MCF 10A (cell line): ENCODE measurements at regions of chr1 and their contacts with region 1.

Region 1: DNA sequence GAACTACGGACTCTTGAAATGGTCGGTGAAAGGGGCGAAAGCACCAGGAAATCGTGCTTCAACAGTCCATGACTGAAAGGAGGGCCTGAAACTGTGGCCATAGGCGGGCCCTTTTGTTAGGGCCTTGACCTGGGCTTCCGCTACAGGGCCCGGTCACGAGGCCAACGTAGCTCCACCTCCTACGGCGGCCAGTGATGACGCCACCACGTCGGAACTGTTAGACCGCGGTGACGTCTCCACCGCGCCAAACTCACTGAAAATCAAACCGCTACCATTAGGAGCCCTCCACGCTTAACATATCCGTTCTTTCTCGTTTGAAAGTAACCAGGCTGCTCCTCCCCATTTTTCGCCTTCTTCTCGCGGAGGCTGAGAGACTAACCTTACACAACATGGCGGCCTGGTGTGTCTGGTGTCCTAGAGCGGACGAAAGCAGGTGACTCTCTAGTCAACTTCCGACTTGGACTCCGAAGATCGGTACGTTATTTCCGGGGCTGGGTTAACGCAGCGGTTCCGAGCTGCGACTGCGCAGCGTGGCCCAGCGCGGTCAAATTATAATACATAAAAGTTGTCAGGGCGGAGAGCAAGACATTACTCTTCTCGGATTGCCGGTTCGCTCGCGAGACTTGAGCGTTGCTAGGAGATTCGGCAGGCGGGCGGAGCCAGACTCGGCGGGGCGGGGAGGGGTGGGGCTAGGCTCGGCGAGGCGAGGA is 376 bp upstream of the CACYBP start:
- DNase-seq: peak; percentile 100
- H3K4me3 Mint-ChIP-seq: no peak overlapping the region
- H3K27ac Mint-ChIP-seq: no peak overlapping the region
- H3K4me1 Mint-ChIP-seq: peaks cover 41% of the 10 kb centered on the region
- H3K27me3 Mint-ChIP-seq: no peaks in the 10 kb centered on the region
- CTCF ChIP-seq: no peak

Region 2: GRCh38 chr1:174276087-174276486 is 723.3 kb before region 1 on chr1:
- CTCF ChIA-PET with region 1: no interaction called
- POLR2A ChIA-PET with region 1: no interaction called
- intact Hi-C with region 1: no loop called
- DNase-seq: no peak
- H3K4me3 Mint-ChIP-seq: no peak overlapping the region
- H3K27ac Mint-ChIP-seq: no peak overlapping the region
- H3K4me1 Mint-ChIP-seq: no peaks in the 10 kb centered on the region
- H3K27me3 Mint-ChIP-seq: no peaks in the 10 kb centered on the region
- CTCF ChIP-seq: no peak

Region 3: DNA sequence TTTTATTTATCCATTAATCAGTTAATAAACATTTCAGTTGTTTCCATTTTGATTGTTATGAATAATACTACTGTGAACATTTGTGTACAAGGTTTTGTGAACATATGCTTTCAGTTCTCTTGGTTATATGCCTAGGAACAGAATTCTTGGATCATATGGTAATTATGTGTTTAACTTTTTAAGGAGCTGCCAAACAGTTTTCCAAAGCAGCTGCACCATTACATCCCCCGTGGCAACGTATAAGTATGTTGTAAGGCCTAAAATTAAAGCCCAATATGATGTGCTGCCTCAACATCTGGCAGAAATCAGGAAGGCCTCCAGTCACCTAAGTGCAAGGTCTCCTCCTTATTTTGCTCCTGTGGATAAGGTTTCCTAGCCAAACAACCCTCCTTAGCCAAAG is 235.2 kb before region 1 on chr1:
- CTCF ChIA-PET with region 1: interaction called, 96 read pairs
- POLR2A ChIA-PET with region 1: interaction called, 20 read pairs
- intact Hi-C with region 1: no loop called
- DNase-seq: no peak
- H3K4me3 Mint-ChIP-seq: no peak overlapping the region
- H3K27ac Mint-ChIP-seq: no peak overlapping the region
- H3K4me1 Mint-ChIP-seq: no peaks in the 10 kb centered on the region
- H3K27me3 Mint-ChIP-seq: no peaks in the 10 kb centered on the region
- CTCF ChIP-seq: no peak

Region 4: DNA sequence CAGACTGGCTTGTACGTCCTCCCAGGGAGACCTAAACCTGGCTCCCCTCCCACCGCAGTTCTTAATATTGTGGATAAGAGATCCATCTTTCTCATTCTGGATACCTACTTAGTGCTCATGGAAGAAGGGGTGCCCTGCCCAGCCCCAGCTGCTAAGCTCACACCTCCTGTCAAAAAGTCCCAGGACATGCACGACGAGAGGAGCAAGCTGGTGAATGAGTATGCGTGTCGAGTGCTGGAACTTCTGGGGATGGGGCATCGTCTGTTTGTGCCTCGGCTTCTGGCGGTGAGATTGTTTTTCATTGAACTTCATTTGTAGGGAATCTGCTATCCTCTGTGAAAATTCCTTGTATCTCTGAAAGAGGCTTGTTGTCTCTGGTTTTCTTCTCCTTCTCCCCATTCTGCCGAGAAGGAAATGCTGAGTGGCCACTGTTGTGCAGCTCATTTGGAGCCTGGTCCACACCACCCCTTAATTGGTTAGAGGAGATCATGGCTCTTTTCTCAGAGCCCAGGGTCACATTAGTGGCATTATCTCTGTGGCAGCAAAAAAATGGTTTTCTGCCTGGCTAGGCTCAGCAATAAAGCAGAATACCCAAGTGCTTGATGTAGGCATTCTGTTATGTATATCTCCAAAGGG is 199.0 kb before region 1 on chr1:
- CTCF ChIA-PET with region 1: interaction called, 9 read pairs
- POLR2A ChIA-PET with region 1: interaction called, 40 read pairs
- intact Hi-C with region 1: no loop called
- DNase-seq: no peak
- H3K4me3 Mint-ChIP-seq: no peak overlapping the region
- H3K27ac Mint-ChIP-seq: no peak overlapping the region
- H3K4me1 Mint-ChIP-seq: peaks cover 8% of the 10 kb centered on the region
- H3K27me3 Mint-ChIP-seq: no peaks in the 10 kb centered on the region
- CTCF ChIP-seq: no peak

Region 5: GRCh38 chr1:174968750-174969244 is 30.6 kb before region 1 on chr1:
- CTCF ChIA-PET with region 1: interaction called, 7 read pairs
- POLR2A ChIA-PET with region 1: interaction called, 25 read pairs
- intact Hi-C with region 1: no loop called
- DNase-seq: peak; percentile 60
- H3K4me3 Mint-ChIP-seq: no peak overlapping the region
- H3K27ac Mint-ChIP-seq: no peak overlapping the region
- H3K4me1 Mint-ChIP-seq: peaks cover 22% of the 10 kb centered on the region
- H3K27me3 Mint-ChIP-seq: no peaks in the 10 kb centered on the region
- CTCF ChIP-seq: no peak

Region 6: DNA sequence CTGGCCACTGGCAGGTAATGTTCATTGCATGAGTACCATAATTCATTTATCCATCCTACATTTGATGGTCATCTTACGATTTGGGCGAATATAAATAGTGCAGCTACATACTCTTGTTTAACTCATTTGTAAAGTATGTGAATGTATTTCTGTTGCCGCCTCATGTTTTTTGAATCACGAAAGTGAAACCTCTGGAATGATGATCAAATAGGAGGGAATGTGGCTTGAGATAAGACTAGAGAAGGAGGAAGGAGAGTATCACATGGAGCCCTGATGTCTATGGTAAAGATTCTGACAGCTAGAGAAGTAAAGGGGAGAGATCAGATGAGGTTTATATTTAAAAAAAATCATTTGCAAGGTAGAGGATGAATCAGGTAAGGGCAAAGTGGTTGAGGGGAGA is 15.9 kb after region 1 on chr1:
- CTCF ChIA-PET with region 1: interaction called, 12 read pairs
- POLR2A ChIA-PET with region 1: interaction called, 331 read pairs
- intact Hi-C with region 1: no loop called
- DNase-seq: no peak
- H3K4me3 Mint-ChIP-seq: no peak overlapping the region
- H3K27ac Mint-ChIP-seq: no peak overlapping the region
- H3K4me1 Mint-ChIP-seq: peaks cover 6% of the 10 kb centered on the region
- H3K27me3 Mint-ChIP-seq: no peaks in the 10 kb centered on the region
- CTCF ChIP-seq: no peak

Region 7: DNA sequence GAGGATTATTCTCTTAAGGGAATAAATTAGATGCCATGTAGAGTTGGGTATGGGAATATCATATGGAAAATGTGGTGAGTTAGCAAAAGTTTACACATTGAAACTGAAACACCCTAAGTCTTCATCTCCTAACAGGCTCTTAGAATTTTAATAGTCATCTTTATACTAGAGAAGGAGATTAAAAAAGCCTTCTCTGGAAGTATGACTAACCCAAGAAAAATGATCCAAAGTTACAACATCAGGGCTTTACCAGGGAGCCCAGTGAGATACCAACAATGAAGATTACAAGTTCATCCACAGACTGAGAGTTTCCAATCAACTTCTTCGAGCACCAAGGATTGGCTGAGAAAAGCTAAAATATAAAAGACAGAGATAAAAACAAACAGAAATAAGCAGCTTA is 263.2 kb after region 1 on chr1:
- CTCF ChIA-PET with region 1: no interaction called
- POLR2A ChIA-PET with region 1: no interaction called
- intact Hi-C with region 1: no loop called
- DNase-seq: peak; percentile 31
- H3K4me3 Mint-ChIP-seq: no peak overlapping the region
- H3K27ac Mint-ChIP-seq: no peak overlapping the region
- H3K4me1 Mint-ChIP-seq: peaks cover 6% of the 10 kb centered on the region
- H3K27me3 Mint-ChIP-seq: peaks cover 17% of the 10 kb centered on the region
- CTCF ChIP-seq: no peak